Adrenal gland (tissue), 19 donors: ENCODE measurements at regions of chr12 and their contacts with region 1.

Region 1: GRCh38 chr12:66144791-66145754 is 14.5 kb upstream of the LLPH start:
- DNase-seq: peak; percentile 41 to 76 (median 70)
- H3K4me3 ChIP-seq: no peak overlapping the region
- H3K27ac ChIP-seq: peak overlapping the region; percentile 13 to 65 (median 32)
- H3K4me1 ChIP-seq: peaks cover 0 to 15% of the 10 kb centered on the region in 2 donors
- H3K27me3 ChIP-seq: no peaks in the 10 kb centered on the region
- CTCF ChIP-seq: peak; percentile 32 to 83 (median 70)
- POLR2A ChIP-seq: no peak

Region 2: GRCh38 chr12:66235626-66236281 is 90.7 kb after region 1 on chr12:
- intact Hi-C with region 1: loop called in 1 of 2 experiments (anchors 5 kb)
- DNase-seq: no peak
- H3K4me3 ChIP-seq: peak overlapping the region in 2 of 4 donors; percentile 20 to 67
- H3K27ac ChIP-seq: peak overlapping the region in 2 of 5 donors; percentile 20 to 70
- H3K4me1 ChIP-seq: peaks cover 0 to 10% of the 10 kb centered on the region in 2 donors
- H3K27me3 ChIP-seq: no peaks in the 10 kb centered on the region
- CTCF ChIP-seq: peak in 3 of 6 experiments; percentile 24 to 27 (median 26)
- POLR2A ChIP-seq: no peak